Naive thymus-derived CD4-positive, alpha-beta T cell (primary cell): ENCODE measurements at regions of chr6 and their contacts with region 1.

Region 1: DNA sequence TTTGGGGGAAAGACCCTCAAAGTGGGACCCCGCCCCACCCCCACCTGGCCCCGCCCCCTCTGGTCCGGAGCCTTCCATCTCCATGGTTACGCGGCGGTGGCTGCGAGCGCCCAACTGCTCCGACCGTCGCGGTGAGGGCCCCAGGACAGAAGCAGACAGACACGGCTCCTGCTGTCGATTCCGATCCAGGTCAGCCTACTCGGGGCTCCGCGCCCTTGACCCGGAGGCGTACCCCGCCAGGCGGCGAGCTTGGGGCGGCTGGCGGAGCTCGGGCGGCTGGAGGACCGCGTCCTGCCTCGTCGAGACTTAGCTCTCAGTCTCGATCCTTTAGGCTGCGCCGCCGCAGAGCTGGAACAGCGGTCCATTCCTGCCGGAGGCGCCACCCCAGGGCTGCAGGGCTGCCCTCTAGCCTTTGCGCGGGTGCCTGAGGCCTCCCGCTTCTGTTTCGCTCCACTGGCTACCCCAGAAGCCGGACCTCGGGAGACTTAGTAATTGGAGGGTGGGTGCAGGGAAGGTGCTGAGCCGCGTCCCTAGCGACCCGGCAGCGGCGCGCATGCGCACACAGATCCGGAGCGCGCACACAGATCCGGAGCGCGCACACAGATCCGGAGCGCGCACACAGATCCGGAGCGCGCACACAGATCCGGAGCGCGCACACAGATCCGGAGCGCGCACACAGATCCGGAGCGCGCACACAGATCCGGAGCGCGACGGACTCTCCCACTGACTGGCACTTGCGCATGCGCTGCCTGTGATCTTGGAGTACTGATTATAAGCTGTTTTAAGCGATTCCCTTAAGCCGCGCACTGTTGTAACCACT is at the start of gene CFAP206:
- DNase-seq: peak; percentile 75 to 87 (median 81)
- ATAC-seq: peak; percentile 91
- H3K4me3 ChIP-seq: peak within 1 kb of the TSS; percentile 98
- H3K4me3 Mint-ChIP-seq: peak within 1 kb of the TSS; percentile 76 to 94 (median 88)
- H3K27ac ChIP-seq: peak within 1 kb of the TSS; percentile 75
- H3K27ac Mint-ChIP-seq: peak within 1 kb of the TSS in 8 of 9 donors; percentile 21 to 91 (median 70)
- H3K4me1 ChIP-seq: peaks cover 0 to 5% of the 10 kb centered on the region in 2 donors
- H3K4me1 Mint-ChIP-seq: peaks cover 0 to 7% (median 5%) of the 10 kb centered on the region in 7 donors
- H3K27me3 ChIP-seq: no peaks in the 10 kb centered on the region
- H3K27me3 Mint-ChIP-seq: peaks cover 18 to 47% (median 23%) of the 10 kb centered on the region in 5 donors
- total RNA-seq, gene CFAP206: not detected

Region 2: DNA sequence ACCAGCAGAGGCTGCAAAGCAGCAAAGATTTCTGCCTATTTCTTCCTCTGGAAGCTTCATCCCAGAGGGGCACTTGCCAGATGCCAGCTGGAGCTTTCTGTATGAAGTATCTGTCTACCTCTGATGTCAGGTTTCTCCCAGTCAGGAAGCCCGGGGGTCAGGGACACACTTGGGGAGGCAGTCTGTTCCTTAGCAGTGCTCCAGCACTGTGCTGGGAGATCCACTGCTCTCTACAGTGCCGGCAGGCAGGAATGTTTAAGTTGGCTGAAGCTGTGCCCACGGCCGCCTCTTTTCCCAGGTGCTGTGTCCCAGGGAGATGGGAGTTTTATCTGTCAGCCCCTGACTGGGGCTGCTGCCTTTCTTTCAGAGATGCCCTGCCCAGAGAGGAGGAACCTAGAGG is 1101.9 kb before region 1 on chr6:
- CTCF ChIA-PET with region 1: no interaction called
- POLR2A ChIA-PET with region 1: no interaction called
- intact Hi-C with region 1: no loop called
- DNase-seq: no peak
- ATAC-seq: no peak
- H3K4me3 ChIP-seq: no peak overlapping the region
- H3K4me3 Mint-ChIP-seq: no peak overlapping the region
- H3K27ac ChIP-seq: no peak overlapping the region
- H3K27ac Mint-ChIP-seq: no peak overlapping the region
- H3K4me1 ChIP-seq: no peaks in the 10 kb centered on the region
- H3K4me1 Mint-ChIP-seq: no peaks in the 10 kb centered on the region
- H3K27me3 ChIP-seq: no peaks in the 10 kb centered on the region
- H3K27me3 Mint-ChIP-seq: no peaks in the 10 kb centered on the region

Region 3: DNA sequence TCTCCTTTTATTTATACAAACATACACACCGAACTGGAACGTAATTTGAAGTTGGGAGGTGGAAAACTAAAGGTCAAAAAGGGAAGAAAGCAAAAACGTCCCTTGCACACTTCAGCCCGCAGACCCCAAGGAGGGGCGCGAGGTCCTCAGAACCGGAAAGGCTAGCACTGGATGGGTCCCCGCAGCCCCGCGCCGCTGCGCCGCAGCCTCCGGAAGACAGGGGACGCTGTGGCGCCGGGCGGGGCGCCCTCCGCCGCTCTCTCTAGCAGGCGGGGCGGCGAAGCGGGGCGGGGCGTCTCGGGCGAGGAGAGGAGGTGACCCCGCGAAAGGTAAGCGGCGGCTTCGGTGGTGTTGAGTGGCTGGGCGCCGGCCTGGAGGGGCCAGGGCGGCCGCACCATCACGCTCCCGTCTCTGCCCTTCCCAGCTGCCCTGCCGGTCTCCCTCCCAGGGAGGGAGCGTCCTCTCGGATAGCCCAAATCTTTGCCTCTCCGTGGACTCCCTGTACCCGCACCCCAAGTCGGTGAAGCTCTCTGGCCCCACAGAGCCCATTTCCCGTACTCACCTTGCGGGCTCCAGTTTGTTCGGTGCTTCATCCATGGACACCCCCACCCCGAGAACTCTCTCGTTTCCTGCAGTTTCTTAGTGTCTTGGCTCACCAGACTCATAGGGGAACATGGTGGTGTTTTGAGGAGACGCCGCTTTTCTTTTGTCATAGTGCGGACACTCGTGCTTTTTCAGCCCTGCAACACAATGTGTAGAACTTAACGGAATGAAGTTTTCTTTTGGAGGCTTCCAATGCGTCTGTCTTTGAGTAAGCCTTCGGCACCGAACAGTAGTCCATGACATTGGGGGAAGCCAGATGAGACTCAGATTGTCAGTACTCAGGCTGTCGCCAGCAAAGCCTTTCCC is 85.6 kb before region 1 on chr6 and contains the start of gene SMIM8:
- CTCF ChIA-PET with region 1: no interaction called
- POLR2A ChIA-PET with region 1: interaction called, 6 read pairs
- intact Hi-C with region 1: loop called (anchors 1 kb)
- DNase-seq: peak; percentile 67 to 94 (median 81)
- ATAC-seq: peak; percentile 100
- H3K4me3 ChIP-seq: peak within 1 kb of the TSS; percentile 82
- H3K4me3 Mint-ChIP-seq: peak within 1 kb of the TSS; percentile 94 to 99 (median 98)
- H3K27ac ChIP-seq: peak within 1 kb of the TSS; percentile 80
- H3K27ac Mint-ChIP-seq: peak within 1 kb of the TSS; percentile 77 to 95 (median 93)
- H3K4me1 ChIP-seq: no peaks in the 10 kb centered on the region
- H3K4me1 Mint-ChIP-seq: peaks cover 14 to 32% (median 26%) of the 10 kb centered on the region in 7 donors
- H3K27me3 ChIP-seq: no peaks in the 10 kb centered on the region
- H3K27me3 Mint-ChIP-seq: peaks cover 0 to 6% (median 5%) of the 10 kb centered on the region in 5 donors
- total RNA-seq, gene SMIM8: 7.3 to 15.7 (median 10.5) TPM

Region 4: DNA sequence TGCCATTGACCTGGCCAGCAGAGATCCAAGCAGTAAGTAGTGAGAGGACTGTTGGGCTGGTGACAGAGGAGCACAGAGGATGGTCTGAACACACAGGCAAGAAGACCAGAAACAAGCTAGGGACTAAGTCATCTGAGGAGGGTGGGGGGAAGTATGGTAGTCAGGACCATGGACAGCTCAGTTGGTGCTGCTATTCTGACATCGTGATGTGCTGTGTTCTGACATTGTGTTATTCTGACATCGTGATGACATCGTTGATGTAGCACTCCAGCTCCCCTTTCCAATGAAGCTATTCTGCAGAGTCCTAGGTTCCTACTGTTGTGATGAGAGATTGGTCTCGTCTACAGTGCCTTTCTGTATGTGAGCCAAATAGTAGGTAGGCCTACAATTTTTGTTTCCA is 28.3 kb after region 1 on chr6:
- CTCF ChIA-PET with region 1: no interaction called
- POLR2A ChIA-PET with region 1: no interaction called
- intact Hi-C with region 1: loop called in 1 of 2 experiments (anchors 2 kb)
- DNase-seq: peak; percentile 8 to 51 (median 44)
- ATAC-seq: peak; percentile 83
- H3K4me3 ChIP-seq: no peak overlapping the region
- H3K4me3 Mint-ChIP-seq: no peak overlapping the region
- H3K27ac ChIP-seq: no peak overlapping the region
- H3K27ac Mint-ChIP-seq: no peak overlapping the region
- H3K4me1 ChIP-seq: no peaks in the 10 kb centered on the region
- H3K4me1 Mint-ChIP-seq: no peaks in the 10 kb centered on the region
- H3K27me3 ChIP-seq: peaks cover 0 to 3% of the 10 kb centered on the region in 2 donors
- H3K27me3 Mint-ChIP-seq: peaks cover 5 to 41% (median 16%) of the 10 kb centered on the region in 5 donors

Region 5: DNA sequence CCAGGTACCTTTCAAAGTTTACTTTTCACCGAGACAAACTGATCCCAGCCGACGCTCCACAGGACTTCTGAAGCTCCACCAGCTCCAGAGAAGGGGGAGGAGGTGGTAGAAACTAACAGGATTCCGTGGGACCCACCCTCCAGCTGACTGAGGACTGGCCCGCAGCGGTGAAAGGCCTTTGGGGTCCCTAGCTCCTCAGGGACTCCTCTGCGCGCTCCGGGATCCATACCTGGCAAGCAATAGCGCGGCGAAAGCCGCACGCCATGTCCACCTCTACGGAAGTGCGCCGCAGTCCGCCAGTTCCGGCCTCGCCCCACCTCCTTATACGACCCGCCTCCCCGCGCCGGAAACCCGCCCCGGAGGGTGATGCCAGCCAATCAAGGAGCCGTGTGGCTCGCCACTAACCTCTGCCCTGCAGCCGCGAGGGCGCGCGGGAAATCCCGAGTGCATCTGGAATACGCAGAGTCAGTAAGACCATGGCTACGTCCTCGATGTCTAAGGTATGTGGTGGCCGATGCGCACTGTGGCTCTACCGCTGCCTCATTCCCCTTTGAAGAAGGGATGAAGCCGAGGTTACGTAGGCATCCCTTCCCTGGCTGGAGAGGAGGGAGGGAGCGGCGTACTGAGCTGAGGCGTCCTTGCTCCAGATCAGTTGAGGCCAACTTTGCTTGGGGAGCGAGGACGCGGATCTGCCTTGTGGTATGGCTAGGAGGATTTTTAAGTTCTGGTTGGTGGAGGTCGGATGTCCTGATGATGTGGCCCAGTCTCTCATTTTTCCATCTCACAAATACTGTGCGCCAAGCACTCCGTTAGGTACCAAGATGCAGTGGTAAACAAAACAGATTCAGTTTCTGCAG is 181.8 kb after region 1 on chr6 and contains the starts of genes ORC3 and RARS2:
- CTCF ChIA-PET with region 1: no interaction called
- POLR2A ChIA-PET with region 1: no interaction called
- intact Hi-C with region 1: loop called (anchors 1 to 2 kb)
- DNase-seq: peak; percentile 86 to 97 (median 92)
- ATAC-seq: peak; percentile 100
- H3K4me3 ChIP-seq: peak within 1 kb of the TSS; percentile 89
- H3K4me3 Mint-ChIP-seq: peak within 1 kb of the TSS; percentile 87 to 100 (median 96)
- H3K27ac ChIP-seq: peak within 1 kb of the TSS; percentile 92
- H3K27ac Mint-ChIP-seq: peak within 1 kb of the TSS; percentile 87 to 97 (median 95)
- H3K4me1 ChIP-seq: peaks cover 22 to 32% of the 10 kb centered on the region in 2 donors
- H3K4me1 Mint-ChIP-seq: peaks cover 49 to 81% (median 75%) of the 10 kb centered on the region in 7 donors
- H3K27me3 ChIP-seq: no peaks in the 10 kb centered on the region
- H3K27me3 Mint-ChIP-seq: no peaks in the 10 kb centered on the region
- total RNA-seq, gene ORC3: 17.7 to 29.8 (median 27.6) TPM
- total RNA-seq, gene RARS2: 21.0 to 40.0 (median 24.2) TPM

Region 6: GRCh38 chr6:88963139-88964090 is 1555.3 kb after region 1 on chr6 and contains the start of gene RNGTT:
- CTCF ChIA-PET with region 1: no interaction called
- POLR2A ChIA-PET with region 1: no interaction called
- intact Hi-C with region 1: loop called in 1 of 2 experiments (anchors 5 kb)
- DNase-seq: peak; percentile 89 to 98 (median 95)
- ATAC-seq: peak; percentile 100
- H3K4me3 ChIP-seq: peak within 1 kb of the TSS; percentile 82
- H3K4me3 Mint-ChIP-seq: peak within 1 kb of the TSS; percentile 91 to 99 (median 98)
- H3K27ac ChIP-seq: peak within 1 kb of the TSS; percentile 82
- H3K27ac Mint-ChIP-seq: peak within 1 kb of the TSS; percentile 85 to 97 (median 94)
- H3K4me1 ChIP-seq: peaks cover 9 to 18% of the 10 kb centered on the region in 2 donors
- H3K4me1 Mint-ChIP-seq: peaks cover 25 to 57% (median 52%) of the 10 kb centered on the region in 7 donors
- H3K27me3 ChIP-seq: no peaks in the 10 kb centered on the region
- H3K27me3 Mint-ChIP-seq: peaks cover 0 to 2% (median 0%) of the 10 kb centered on the region in 5 donors
- total RNA-seq, gene RNGTT: 15.4 to 26.5 (median 20.8) TPM